Posterior vena cava (tissue), 2 donors: ENCODE measurements at regions of chr1 and their contacts with region 1.

Region 1: DNA sequence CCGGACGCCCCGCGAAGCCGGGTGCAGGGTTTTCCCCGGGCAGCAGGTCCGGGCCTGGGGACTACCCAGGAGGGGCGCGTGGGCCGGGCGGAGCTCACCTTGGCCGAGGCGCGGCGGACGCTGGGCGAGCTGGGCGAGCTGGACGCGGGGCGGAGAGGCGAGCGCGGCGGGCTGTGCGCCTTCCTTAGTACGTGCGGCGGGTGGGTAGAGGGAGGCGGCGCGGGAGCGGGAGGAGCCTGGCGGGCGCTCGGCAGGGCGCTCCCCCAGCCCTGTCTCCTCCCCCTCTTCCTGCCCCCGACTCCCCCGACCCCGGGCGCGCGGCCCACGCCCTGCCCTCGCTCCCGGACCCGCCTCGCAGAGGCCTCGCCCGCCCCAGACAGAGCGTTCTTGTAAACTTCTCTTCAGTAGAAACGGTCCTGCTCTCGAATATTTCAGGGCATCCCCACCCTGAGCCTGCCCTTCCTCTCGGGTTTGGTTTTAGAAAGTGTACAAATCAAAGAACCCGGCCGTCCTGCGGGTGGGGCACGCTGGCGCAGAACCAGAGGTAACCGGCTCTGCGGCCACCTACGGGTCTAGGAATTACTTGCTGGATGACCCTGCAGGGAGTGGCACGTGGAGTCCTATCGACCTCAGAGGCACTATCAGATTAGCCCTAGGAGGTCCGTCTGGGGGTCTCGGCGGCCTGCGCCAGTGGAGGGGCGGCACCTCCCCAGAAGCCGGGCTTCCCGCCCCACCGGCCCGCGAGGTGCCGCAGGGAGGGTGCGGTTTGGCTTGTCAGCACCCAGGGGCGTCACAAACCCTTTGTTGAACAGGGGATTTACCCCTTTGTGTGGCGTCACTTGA is at the start of gene S100A10:
- DNase-seq: peak; percentile 96
- total RNA-seq, gene S100A10: 244 to 281 TPM

Region 2: DNA sequence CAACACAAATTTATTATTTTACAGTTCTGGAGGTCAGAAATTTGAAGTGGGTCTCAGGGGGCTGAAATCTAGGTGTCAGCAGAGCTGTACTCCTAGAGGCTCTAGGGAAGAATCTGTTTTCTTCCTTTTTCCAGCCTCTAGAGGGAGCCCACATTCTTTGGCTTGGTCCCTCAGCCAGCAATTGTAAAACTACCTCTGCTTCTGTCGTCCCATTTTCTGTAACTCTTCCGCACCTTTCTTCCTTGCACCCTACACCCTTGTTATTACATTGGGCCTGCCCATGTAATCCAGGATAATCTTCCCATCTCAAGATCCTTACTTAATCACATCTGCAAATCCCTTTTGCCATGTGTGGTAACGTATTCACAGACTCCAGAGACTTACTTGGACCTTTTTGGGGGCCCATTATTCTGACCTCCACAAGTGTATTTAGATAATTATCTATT is 59.8 kb before region 1 on chr1:
- intact Hi-C with region 1: loop called in 1 of 2 experiments (anchors 2 kb)
- DNase-seq: no peak

Region 3: DNA sequence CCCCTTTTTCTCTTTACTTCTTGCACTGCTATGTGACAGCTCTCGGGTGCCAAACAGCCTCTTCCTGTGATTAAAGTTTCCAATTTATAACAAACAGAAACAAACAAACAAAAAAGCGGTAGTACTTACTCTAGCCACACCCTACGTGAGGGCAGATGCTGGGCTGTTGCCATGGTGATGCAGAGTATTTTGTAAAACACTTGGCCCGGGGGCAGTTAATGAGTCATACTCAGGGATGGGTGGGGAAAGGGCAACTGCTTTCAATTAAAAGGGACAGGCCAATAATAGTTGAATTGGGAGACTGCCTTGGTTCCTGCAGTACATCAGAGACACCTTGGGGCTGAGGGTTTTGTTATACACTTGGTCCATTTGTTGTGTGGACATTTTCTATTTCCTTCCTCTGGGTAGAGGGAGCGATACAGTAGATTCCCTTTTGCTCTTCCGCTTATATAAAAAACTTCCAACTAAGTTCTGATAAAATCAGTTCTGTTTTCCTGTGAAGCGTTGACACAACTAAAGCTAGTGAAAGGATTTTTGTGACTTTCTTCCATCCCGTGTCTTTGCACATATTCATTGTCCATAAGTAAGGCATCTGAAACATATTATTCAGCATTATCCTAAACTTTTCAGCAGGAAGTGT is 48.0 kb before region 1 on chr1:
- intact Hi-C with region 1: loop called in 1 of 2 experiments (anchors 5 kb)
- DNase-seq: peak; percentile 94